Aorta (tissue), 5 donors: ENCODE measurements at regions of chr3 and their contacts with region 1.

Region 1: DNA sequence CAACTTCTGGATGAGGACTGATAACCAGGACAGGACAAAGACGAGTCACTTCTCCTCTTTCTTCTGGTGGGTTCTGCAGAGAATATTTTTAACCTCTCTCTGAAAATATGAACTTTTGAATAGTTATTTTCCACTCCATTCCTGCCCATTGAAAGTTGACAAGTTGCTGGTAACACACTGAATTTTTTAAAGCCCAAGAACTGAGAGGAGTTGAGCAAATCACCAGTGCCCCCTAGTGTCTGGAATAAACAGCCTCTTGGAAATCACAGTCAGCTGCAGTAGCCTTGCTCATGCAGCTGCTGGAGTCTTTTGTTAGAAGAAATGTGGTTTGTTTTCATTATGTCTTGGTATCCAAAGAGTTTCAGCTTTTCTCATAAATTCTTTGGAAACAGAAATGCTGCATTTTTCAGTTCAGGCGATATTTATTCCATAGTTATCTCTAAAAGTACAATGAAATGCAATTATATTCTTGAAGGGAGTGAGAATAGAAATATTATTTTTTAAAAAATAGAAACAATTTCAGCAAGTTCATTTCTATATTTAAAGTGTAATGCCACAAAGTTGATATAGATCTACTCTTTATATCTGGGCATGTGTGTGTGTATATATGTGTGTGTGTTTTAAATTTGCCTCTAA is 741.0 kb upstream of the CBLB start:
- DNase-seq: no peak
- ATAC-seq: peak; percentile 90
- H3K4me3 ChIP-seq: no peak overlapping the region
- H3K27ac ChIP-seq: no peak overlapping the region
- H3K4me1 ChIP-seq: no peaks in the 10 kb centered on the region
- H3K27me3 ChIP-seq: no peaks in the 10 kb centered on the region

Region 2: GRCh38 chr3:105676621-105677300 is 933.0 kb before region 1 on chr3:
- intact Hi-C with region 1: loop called in 1 of 2 experiments (anchors 10 kb)
- DNase-seq: no peak
- ATAC-seq: no peak
- H3K4me3 ChIP-seq: no peak overlapping the region
- H3K27ac ChIP-seq: no peak overlapping the region
- H3K4me1 ChIP-seq: peaks cover 2 to 5% of the 10 kb centered on the region in 2 donors
- H3K27me3 ChIP-seq: no peaks in the 10 kb centered on the region

Region 3: GRCh38 chr3:105686278-105686897 is 923.4 kb before region 1 on chr3:
- intact Hi-C with region 1: loop called in 1 of 2 experiments (anchors 5 kb)
- DNase-seq: no peak
- ATAC-seq: no peak
- H3K4me3 ChIP-seq: no peak overlapping the region
- H3K27ac ChIP-seq: no peak overlapping the region
- H3K4me1 ChIP-seq: no peaks in the 10 kb centered on the region
- H3K27me3 ChIP-seq: no peaks in the 10 kb centered on the region

Region 4: GRCh38 chr3:106985721-106986120 is 375.9 kb after region 1 on chr3:
- intact Hi-C with region 1: no loop called
- DNase-seq: no peak
- ATAC-seq: no peak
- H3K4me3 ChIP-seq: no peak overlapping the region
- H3K27ac ChIP-seq: peak overlapping the region in 1 of 2 donors; percentile 57
- H3K4me1 ChIP-seq: peaks cover 3 to 16% of the 10 kb centered on the region in 2 donors
- H3K27me3 ChIP-seq: no peaks in the 10 kb centered on the region